Endothelial cell of umbilical vein (primary cell): ENCODE measurements at regions of chr2 and their contacts with region 1.

Region 1: DNA sequence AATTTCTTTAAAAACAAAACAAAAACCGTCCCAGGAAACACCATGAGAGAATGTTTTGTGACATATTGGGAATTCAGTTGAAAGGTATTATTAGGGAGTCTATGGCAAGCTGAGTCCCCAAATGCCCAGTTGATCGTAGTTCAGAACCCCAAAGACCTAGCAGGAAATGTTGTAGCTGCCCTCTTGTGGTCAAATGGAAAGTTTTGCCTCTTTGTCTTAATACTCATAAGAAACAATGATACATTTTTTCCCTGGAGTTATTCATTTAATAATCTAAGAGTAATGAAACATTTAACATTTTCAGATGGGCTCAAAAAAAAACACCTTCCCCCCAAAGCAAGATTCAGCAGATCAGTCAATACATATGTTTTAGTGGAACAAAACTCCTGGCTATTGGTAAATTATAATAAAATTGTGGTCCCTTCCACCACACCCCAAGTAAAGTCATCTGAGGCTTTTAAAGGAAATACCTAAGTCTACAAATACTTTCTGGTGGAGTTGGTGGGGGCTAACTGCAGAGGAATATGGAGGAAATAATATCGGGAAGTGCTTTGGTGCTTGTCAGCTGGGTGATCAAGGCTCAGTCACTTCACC is 37.8 kb upstream of the EFEMP1 start:
- DNase-seq: peak; percentile 86
- H3K4me3 ChIP-seq: no peak overlapping the region
- H3K27ac ChIP-seq: peak overlapping the region; percentile 86
- H3K4me1 ChIP-seq: peaks cover 38% of the 10 kb centered on the region
- H3K27me3 ChIP-seq: no peaks in the 10 kb centered on the region
- CTCF ChIP-seq: peak; percentile 49 to 56
- POLR2A ChIP-seq: peak; percentile 55

Region 2: DNA sequence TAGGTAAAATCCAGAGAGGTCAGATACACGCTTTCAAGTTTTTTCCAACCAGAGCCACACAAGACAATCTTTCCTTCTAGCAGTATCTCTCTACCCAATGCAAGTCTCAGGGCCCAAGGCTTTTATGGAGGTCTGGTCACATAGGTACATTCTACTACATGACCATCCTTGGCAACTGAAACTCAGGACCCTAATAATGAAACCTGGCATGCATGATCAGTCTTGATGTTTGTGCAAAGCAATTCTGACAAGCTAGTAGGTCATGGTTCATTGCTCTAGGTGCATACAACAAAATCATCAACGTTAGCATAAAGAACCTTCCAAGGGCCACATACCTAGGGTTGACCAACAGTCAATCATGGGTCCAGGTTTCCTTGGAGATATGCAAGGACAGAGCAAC is 508.5 kb before region 1 on chr2:
- CTCF ChIA-PET with region 1: no interaction called
- POLR2A ChIA-PET with region 1: no interaction called
- dilution Hi-C with region 1: no loop called
- intact Hi-C with region 1: no loop called
- DNase-seq: no peak
- H3K4me3 ChIP-seq: no peak overlapping the region
- H3K27ac ChIP-seq: no peak overlapping the region
- H3K4me1 ChIP-seq: no peaks in the 10 kb centered on the region
- H3K27me3 ChIP-seq: no peaks in the 10 kb centered on the region
- CTCF ChIP-seq: no peak
- POLR2A ChIP-seq: no peak

Region 3: GRCh38 chr2:55555977-55556376 is 405.4 kb before region 1 on chr2:
- CTCF ChIA-PET with region 1: no interaction called
- POLR2A ChIA-PET with region 1: no interaction called
- dilution Hi-C with region 1: no loop called
- intact Hi-C with region 1: no loop called
- DNase-seq: peak; percentile 30
- H3K4me3 ChIP-seq: no peak overlapping the region
- H3K27ac ChIP-seq: no peak overlapping the region
- H3K4me1 ChIP-seq: peaks cover 5% of the 10 kb centered on the region
- H3K27me3 ChIP-seq: no peaks in the 10 kb centered on the region
- CTCF ChIP-seq: no peak
- POLR2A ChIP-seq: no peak

Region 4: DNA sequence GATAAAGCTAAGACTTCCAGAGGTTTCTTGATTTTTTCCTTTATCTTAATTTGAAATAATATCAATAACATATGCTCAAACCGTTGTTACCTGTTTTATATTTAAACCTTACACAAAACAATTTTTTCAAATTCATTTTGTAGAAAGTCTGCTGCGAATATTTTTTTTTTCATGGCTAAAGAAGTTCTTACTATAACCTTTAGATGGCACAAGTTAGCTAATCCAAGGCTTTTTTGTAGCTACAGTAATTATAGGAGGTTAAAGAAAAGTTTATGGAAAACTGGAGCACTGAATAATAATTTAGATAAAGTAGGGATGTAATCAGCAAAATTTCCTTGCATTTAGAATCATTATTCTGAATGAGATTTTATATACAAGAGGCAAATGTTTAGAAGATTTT is 189.8 kb before region 1 on chr2:
- CTCF ChIA-PET with region 1: interaction called, 34 read pairs
- POLR2A ChIA-PET with region 1: no interaction called
- dilution Hi-C with region 1: no loop called
- intact Hi-C with region 1: loop called (anchors 1 kb)
- DNase-seq: peak; percentile 66
- H3K4me3 ChIP-seq: no peak overlapping the region
- H3K27ac ChIP-seq: peak overlapping the region; percentile 52
- H3K4me1 ChIP-seq: peaks cover 15% of the 10 kb centered on the region
- H3K27me3 ChIP-seq: no peaks in the 10 kb centered on the region
- CTCF ChIP-seq: peak; percentile 32 to 35
- POLR2A ChIP-seq: no peak

Region 5: GRCh38 chr2:55885129-55885943 is 76.1 kb before region 1 on chr2:
- CTCF ChIA-PET with region 1: interaction called, 7 read pairs
- POLR2A ChIA-PET with region 1: interaction called, 7 read pairs
- dilution Hi-C with region 1: no loop called
- intact Hi-C with region 1: loop called (anchors 2 kb)
- DNase-seq: peak; percentile 95
- H3K4me3 ChIP-seq: no peak overlapping the region
- H3K27ac ChIP-seq: peak overlapping the region; percentile 97
- H3K4me1 ChIP-seq: peaks cover 96% of the 10 kb centered on the region
- H3K27me3 ChIP-seq: no peaks in the 10 kb centered on the region
- CTCF ChIP-seq: no peak
- POLR2A ChIP-seq: peak; percentile 88

Region 6: DNA sequence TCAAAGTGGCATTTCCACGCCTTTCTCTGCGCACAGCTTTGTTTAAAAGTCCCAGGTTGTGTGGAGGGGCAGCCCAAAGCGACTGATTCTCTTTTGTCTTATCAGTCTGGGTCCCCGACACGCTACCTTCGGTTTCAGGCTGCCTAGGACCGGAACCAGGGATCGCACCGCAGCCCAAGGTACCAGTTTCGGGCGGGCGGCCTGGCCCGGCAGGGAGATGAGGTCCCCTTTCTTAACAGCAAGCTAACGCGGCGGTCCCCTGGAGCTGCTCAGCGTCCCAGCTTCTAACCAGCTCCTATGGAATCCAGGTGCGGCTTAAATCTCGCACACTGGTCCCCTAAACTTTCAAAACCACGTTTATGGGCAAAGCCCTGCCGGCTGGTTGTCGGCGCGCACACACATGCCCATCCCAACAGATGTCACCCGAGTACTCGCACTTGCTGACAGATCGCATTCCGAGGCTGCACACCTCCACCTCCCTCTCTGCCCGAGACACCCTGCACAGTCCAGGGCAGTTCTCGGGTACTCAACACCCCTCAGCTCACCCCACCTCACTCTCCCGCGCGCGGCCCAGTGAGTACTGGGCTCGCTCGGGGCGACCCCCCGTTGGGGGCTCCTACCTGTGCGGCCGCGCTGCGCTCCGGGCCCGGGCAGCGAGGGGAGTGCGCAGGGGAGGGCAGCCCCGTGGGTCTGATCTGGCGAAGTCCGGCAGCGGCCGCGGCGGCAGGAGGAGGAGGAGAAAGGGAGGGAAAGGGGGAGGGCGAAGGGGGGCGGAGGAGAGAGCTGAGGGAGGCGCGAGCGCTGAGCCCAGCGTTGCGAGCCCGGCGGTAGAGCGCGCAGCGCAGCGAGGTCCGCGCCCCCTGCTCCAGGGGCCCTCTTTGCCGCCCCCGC is 38.1 kb before region 1 on chr2 and contains the start of gene EFEMP1:
- CTCF ChIA-PET with region 1: interaction called, 25 read pairs
- POLR2A ChIA-PET with region 1: interaction called, 30 read pairs
- dilution Hi-C with region 1: no loop called
- intact Hi-C with region 1: loop called (anchors 1 kb)
- DNase-seq: peak; percentile 87
- H3K4me3 ChIP-seq: peak within 1 kb of the TSS; percentile 57 to 97 (median 91)
- H3K27ac ChIP-seq: peak within 1 kb of the TSS; percentile 82
- H3K4me1 ChIP-seq: peaks cover 43% of the 10 kb centered on the region
- H3K27me3 ChIP-seq: no peaks in the 10 kb centered on the region
- CTCF ChIP-seq: peak in 1 of 2 donors; percentile 4
- POLR2A ChIP-seq: peak; percentile 96
- total RNA-seq, gene EFEMP1: 2,354 and 2,981 TPM in 2 replicates

Region 7: DNA sequence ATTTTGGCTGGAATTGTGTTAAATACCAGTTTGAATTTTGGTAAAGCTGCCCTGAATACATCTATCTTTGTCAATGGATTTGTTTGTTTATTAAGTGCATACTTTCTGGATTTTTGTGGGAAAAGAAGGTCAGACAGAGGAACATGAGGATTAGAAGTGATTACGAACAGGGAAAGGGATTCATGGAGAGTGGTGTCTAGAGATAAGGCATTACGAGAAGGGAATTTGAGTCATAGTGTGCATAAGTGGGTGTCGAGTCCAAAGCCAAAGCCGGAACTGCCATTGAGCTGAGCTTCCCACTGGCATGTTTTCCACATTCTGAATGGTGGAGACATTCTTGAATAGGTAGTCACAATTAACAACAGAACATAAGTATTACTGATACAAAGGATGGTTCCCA is 31.1 kb after region 1 on chr2:
- CTCF ChIA-PET with region 1: interaction called, 38 read pairs
- POLR2A ChIA-PET with region 1: interaction called, 40 read pairs
- dilution Hi-C with region 1: no loop called
- intact Hi-C with region 1: loop called (anchors 1 kb)
- DNase-seq: peak; percentile 100
- H3K4me3 ChIP-seq: no peak overlapping the region
- H3K27ac ChIP-seq: peak overlapping the region; percentile 97
- H3K4me1 ChIP-seq: peaks cover 62% of the 10 kb centered on the region
- H3K27me3 ChIP-seq: no peaks in the 10 kb centered on the region
- CTCF ChIP-seq: no peak
- POLR2A ChIP-seq: peak; percentile 70